ENCODE measurements at regions of chr18 and their contacts with region 1.

Region 1: DNA sequence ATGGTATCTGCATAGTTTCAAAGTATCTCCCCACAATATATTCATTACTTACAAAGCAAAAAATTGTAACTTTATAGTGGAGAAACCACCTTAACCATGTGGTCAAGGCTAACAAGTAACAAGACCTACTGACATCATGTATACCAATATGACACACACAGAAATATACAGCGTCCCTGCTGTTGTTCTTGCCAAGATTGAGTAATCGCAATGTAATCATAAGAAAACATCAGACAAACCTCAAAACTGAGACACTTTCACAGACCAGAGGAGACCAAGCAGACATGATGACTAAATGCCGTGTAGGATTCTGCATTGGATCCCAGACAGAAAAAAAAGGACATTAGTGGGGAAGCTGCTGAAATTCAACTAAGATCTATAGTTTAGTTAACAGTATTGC is 123.0 kb downstream of the ACAA2 start:
- DNase-seq: peak; percentile 97
- ATAC-seq: peak; percentile 63
- H3K4me3 ChIP-seq: no peak overlapping the region
- H3K27ac ChIP-seq: no peak overlapping the region
- H3K4me1 ChIP-seq: peaks cover 9% of the 10 kb centered on the region
- H3K27me3 ChIP-seq: no peaks in the 10 kb centered on the region
- CTCF ChIP-seq: no peak
- POLR2A ChIP-seq: no peak
- RAD21 ChIP-seq: no peak

Region 2: GRCh38 chr18:49548229-49548636 is 142.1 kb before region 1 on chr18:
- CTCF ChIA-PET with region 1: no interaction called
- POLR2A ChIA-PET with region 1: no interaction called
- dilution Hi-C with region 1: no loop called
- in situ Hi-C with region 1: no loop called
- intact Hi-C with region 1: no loop called
- DNase-seq: peak; percentile 62
- ATAC-seq: peak; percentile 88
- H3K4me3 ChIP-seq: no peak overlapping the region
- H3K27ac ChIP-seq: no peak overlapping the region
- H3K4me1 ChIP-seq: no peaks in the 10 kb centered on the region
- H3K27me3 ChIP-seq: peaks cover 8% of the 10 kb centered on the region
- CTCF ChIP-seq: no peak
- POLR2A ChIP-seq: no peak
- RAD21 ChIP-seq: no peak

Region 3: DNA sequence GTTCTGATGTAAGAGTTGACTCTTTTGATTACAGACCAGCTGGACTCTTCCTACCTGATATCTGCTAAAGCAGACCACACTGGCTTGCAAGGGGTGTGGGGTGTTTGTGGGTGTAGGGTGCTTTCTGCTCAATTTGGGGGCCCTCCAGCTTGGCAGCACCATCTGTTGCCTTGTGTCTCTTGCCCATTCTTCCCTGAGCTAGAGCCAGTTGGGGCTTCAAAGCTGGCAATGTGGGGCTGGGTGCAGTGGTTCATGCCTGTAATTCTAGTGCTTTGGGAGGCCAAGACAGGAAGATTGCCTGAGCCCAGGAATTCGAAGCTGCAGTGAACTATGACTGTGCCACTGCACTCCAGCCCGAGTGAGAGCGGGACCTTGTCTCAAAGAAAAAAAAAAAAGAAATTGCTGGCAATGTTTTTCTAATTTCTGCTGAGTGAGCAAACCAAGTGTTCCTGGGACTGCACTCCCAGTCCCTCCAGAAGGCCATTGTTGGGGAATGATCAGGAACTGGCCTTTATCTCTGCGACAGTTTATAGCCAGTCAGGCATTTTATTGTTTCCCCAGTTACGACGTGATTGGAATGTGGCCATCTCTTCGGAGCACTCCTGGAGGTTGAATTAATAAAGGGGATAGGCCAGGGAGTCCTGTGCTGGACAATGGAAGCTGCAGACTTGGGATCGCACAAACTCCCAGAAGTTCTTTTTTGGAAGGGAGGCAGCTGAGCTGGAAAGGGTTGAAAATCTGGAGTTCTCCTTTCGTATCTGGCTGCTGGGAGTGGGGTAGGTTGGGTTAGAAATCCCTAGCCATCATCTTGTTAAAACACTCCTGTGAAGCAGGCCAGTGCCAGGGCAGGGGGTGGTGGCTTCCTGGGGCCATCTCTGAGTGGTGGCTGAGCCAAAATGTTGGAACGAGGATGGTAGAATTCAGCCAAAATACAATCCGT is 71.3 kb before region 1 on chr18:
- CTCF ChIA-PET with region 1: no interaction called
- POLR2A ChIA-PET with region 1: no interaction called
- dilution Hi-C with region 1: no loop called
- in situ Hi-C with region 1: no loop called
- intact Hi-C with region 1: no loop called
- DNase-seq: no peak
- ATAC-seq: no peak
- H3K4me3 ChIP-seq: no peak overlapping the region
- H3K27ac ChIP-seq: no peak overlapping the region
- H3K4me1 ChIP-seq: no peaks in the 10 kb centered on the region
- H3K27me3 ChIP-seq: peaks cover 49% of the 10 kb centered on the region
- CTCF ChIP-seq: no peak
- POLR2A ChIP-seq: no peak
- RAD21 ChIP-seq: no peak

Region 4: GRCh38 chr18:49645841-49646351 is 44.4 kb before region 1 on chr18:
- CTCF ChIA-PET with region 1: no interaction called
- POLR2A ChIA-PET with region 1: no interaction called
- dilution Hi-C with region 1: no loop called
- in situ Hi-C with region 1: no loop called
- intact Hi-C with region 1: loop called (anchors 5 kb)
- DNase-seq: peak; percentile 43
- ATAC-seq: peak; percentile 68
- H3K4me3 ChIP-seq: no peak overlapping the region
- H3K27ac ChIP-seq: no peak overlapping the region
- H3K4me1 ChIP-seq: peaks cover 7% of the 10 kb centered on the region; the same call in 1 of the 2 replicates
- H3K27me3 ChIP-seq: peaks cover 5% of the 10 kb centered on the region
- CTCF ChIP-seq: no peak
- POLR2A ChIP-seq: no peak
- RAD21 ChIP-seq: no peak

Region 5: GRCh38 chr18:49728542-49728941 is 38.2 kb after region 1 on chr18:
- CTCF ChIA-PET with region 1: no interaction called
- POLR2A ChIA-PET with region 1: no interaction called
- dilution Hi-C with region 1: no loop called
- in situ Hi-C with region 1: no loop called
- intact Hi-C with region 1: loop called (anchors 5 kb)
- DNase-seq: no peak
- ATAC-seq: no peak
- H3K4me3 ChIP-seq: no peak overlapping the region
- H3K27ac ChIP-seq: no peak overlapping the region
- H3K4me1 ChIP-seq: peaks cover 22% of the 10 kb centered on the region
- H3K27me3 ChIP-seq: peaks cover 3% of the 10 kb centered on the region
- CTCF ChIP-seq: peak; percentile 44
- POLR2A ChIP-seq: no peak
- RAD21 ChIP-seq: peak; percentile 39; the same call in 1 of the 2 replicates

Region 6: DNA sequence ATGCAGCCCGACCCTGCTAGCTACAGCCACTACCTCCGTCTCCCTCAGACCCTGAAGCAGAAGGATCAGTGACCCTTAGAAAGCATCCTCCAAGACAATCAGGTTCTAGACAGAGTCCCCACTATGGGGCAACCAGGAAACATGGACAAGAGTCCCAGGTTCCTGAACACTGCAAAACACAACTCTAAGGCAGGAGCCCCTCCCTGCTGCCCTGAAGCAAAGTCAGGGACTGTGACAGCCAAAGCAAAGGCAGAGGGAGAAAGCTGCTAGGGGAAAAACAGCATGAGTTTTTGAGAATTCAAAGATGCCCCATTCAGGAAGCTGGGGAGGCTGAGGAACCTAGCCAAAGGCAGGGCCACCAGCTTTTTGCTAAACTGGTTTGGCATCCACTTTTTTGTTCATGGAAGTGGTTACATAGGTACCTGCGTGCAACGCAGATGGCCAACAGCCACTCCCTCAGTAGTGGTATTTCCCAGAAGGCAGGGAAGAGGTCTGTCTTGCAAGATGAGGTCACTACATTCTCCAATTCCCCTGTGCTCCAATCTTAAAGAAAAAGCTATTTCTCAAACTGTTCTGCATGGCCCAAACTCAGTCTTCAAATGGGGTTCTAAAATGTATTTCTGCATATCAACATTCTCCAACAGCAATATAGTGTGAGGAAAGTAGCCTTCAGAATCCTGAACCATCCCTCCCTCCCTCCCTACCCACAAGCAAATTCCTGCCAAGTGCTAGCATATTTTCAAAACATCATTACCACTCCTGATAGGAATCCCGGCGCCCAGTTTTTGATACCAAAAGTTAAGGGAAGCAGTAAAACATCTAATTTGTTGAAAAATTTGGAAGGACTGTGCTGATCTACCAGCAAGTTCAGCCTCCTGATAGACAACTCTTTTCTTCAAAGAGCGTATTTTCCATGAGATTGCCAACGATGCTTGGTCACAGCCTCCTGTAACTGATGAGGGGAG is 471.6 kb after region 1 on chr18:
- CTCF ChIA-PET with region 1: no interaction called
- POLR2A ChIA-PET with region 1: no interaction called
- dilution Hi-C with region 1: no loop called
- in situ Hi-C with region 1: no loop called
- intact Hi-C with region 1: no loop called
- DNase-seq: no peak
- ATAC-seq: no peak
- H3K4me3 ChIP-seq: no peak overlapping the region
- H3K27ac ChIP-seq: no peak overlapping the region
- H3K4me1 ChIP-seq: no peaks in the 10 kb centered on the region
- H3K27me3 ChIP-seq: peaks cover 2% of the 10 kb centered on the region; the same call in 1 of the 2 replicates
- CTCF ChIP-seq: no peak
- POLR2A ChIP-seq: no peak
- RAD21 ChIP-seq: no peak